ENCODE measurements at regions of chr1 and their contacts with region 1.

Region 1: DNA sequence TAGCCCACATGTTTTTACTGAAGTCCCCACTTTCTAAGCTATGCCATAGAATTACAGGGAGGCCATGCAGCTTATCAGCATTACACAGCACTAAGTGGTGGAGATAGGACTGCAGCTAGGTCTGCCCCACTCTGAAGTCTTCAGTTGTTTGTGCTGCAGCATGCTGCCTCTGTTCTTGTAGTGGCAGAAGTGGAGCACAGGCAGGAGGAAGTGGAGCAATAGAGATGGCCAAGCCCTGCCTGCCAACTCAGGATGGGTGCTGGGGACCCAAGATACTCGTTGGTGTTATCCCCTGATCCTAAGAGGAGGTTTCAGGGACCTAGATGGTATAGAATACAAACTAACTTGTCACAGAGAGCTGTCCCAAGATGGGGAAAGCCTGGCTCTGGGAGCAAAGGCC is 12.9 kb downstream of the MRPL37 start:
- DNase-seq: no peak

Region 2: DNA sequence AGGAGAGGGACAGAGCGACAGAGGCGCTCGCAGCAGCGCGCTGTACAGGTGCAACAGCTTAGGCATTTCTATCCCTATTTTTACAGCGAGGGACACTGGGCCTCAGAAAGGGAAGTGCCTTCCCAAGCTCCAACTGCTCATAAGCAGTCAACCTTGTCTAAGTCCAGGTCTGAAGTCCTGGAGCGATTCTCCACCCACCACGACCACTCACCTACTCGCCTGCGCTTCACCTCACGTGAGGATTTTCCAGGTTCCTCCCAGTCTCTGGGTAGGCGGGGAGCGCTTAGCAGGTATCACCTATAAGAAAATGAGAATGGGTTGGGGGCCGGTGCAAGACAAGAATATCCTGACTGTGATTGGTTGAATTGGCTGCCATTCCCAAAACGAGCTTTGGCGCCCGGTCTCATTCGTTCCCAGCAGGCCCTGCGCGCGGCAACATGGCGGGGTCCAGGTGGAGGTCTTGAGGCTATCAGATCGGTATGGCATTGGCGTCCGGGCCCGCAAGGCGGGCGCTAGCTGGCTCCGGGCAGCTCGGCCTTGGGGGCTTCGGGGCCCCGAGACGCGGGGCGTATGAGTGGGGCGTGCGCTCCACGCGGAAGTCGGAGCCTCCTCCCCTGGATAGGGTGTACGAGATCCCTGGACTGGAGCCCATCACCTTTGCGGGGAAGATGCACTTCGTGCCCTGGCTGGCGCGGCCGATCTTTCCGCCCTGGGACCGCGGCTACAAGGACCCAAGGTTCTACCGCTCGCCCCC is 12.9 kb before region 1 on chr1 and contains the starts of genes CYB5RL and MRPL37:
- CTCF ChIA-PET with region 1: no interaction called
- POLR2A ChIA-PET with region 1: interaction called, 10 read pairs
- DNase-seq: peak; percentile 100

Region 3: DNA sequence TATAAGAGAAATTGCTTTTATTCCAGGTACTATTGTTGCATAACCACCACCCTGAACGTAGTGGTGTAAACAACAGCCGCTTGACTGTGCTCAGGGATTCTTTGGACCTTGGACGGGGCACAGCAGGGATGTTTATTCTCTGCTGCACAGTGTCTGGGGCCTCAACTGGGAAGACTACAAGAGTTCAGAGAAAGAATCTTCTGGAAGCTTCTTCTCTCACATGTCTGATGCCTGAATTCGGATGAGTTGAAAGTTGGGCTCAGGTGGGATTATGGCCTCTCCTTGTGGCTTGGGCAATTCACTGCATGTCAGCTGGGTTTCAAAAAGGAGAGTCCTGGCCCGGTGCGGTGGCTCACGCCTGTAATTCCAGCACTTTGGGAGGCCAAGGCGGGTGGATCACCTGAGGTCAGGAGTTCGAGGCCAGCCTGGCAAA is 212.3 kb after region 1 on chr1:
- CTCF ChIA-PET with region 1: no interaction called
- POLR2A ChIA-PET with region 1: no interaction called
- DNase-seq: no peak